ENCODE measurements at regions of chr9 and their contacts with region 1.

Region 1: DNA sequence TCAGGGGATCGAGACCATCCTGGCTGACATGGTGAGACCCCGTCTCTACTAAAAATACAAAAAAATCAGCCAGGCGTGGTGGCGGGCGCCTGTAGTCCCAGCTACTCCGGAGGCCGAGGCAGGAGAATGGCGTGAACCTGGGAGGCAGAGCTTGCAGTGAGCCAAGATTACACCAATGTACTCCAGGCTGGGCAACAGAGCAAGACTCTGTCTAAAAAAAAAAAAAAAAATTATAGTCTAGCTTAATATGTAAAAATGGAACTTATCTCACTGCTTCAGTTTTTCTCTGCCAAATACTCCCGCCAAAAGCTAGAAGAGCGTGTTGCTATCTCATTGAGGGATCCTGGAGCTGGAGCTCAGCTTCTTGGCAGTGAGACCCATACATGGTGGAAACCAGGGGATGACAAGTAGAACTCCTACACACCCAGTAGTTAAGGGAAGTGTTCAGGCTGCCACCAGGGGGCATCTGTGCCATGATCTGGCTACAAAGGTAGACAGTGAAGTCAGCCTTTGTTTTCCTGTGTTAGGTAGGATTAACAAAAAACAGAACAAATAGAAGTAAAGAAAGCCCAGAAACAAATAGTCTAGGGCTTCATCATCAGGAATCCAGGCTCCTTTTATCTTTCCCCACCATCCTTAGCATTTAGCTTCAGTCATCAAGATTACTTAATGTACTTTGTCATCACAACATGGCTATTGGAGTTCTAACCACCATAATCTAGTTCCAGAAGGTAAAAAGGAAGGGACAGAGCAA is 33.6 kb upstream of the GLIPR2 start:
- DNase-seq: peak; percentile 76 to 89 (median 80)
- ATAC-seq: peak; percentile 80 to 97 (median 94)
- H3K4me3 ChIP-seq: no peak overlapping the region
- H3K27ac ChIP-seq: peak overlapping the region in 3 of 12 donors; percentile 3 to 15 (median 11)
- H3K4me1 ChIP-seq: peaks cover 0 to 9% (median 0%) of the 10 kb centered on the region in 12 donors
- H3K27me3 ChIP-seq: no peaks in the 10 kb centered on the region
- CTCF ChIP-seq: peak; percentile 62 to 88 (median 78)
- POLR2A ChIP-seq: no peak

Region 2: GRCh38 chr9:36064448-36065037 is 38.4 kb before region 1 on chr9:
- intact Hi-C with region 1: no loop called
- DNase-seq: no peak
- ATAC-seq: no peak
- H3K4me3 ChIP-seq: no peak overlapping the region
- H3K27ac ChIP-seq: no peak overlapping the region
- H3K4me1 ChIP-seq: peaks cover 0 to 7% (median 0%) of the 10 kb centered on the region in 12 donors
- H3K27me3 ChIP-seq: no peaks in the 10 kb centered on the region
- CTCF ChIP-seq: no peak
- POLR2A ChIP-seq: no peak

Region 3: DNA sequence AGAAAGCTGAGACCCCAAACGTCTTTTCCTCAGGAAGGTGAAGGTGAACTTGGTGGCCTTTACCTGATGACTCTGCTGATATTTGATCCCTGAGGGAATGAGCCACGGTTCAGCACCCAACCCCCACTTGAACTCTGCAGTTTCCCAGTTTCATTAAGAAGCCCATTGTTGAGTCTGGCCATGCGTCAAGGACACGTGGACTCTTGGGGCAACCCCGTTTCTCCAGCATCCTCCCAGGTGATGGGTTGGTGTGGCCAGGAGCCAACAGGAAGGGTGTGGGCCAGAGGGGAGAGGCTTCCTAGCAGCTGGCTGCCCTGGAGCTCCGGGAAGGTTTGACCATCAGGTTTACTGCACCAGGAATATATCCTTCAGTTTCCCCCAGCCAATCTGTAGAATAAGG is 214.8 kb after region 1 on chr9:
- intact Hi-C with region 1: loop called in 4 of 10 experiments (anchors 10 kb)
- DNase-seq: peak in 2 of 5 donors; percentile 27 to 49
- ATAC-seq: peak; percentile 20 to 80 (median 44)
- H3K4me3 ChIP-seq: no peak overlapping the region
- H3K27ac ChIP-seq: no peak overlapping the region
- H3K4me1 ChIP-seq: peaks cover 0 to 8% (median 0%) of the 10 kb centered on the region in 12 donors
- H3K27me3 ChIP-seq: no peaks in the 10 kb centered on the region
- CTCF ChIP-seq: no peak
- POLR2A ChIP-seq: no peak

Measured in heart left ventricle (tissue), 16 donors.